PC-9 (cell line): ENCODE measurements at regions of chr6 and their contacts with region 1.

Region 1: GRCh38 chr6:112253841-112254816 is at the start of gene LAMA4:
- DNase-seq: peak; percentile 68 to 81
- H3K4me3 ChIP-seq: peak within 1 kb of the TSS; percentile 70
- H3K27ac ChIP-seq: peak within 1 kb of the TSS; percentile 93
- H3K4me1 ChIP-seq: peaks cover 42% of the 10 kb centered on the region
- H3K27me3 ChIP-seq: no peaks in the 10 kb centered on the region
- CTCF ChIP-seq: peak; percentile 48; the same call in 1 of the 2 replicates
- total RNA-seq, gene LAMA4: 58.3 and 91.0 TPM in 2 replicates

Region 2: DNA sequence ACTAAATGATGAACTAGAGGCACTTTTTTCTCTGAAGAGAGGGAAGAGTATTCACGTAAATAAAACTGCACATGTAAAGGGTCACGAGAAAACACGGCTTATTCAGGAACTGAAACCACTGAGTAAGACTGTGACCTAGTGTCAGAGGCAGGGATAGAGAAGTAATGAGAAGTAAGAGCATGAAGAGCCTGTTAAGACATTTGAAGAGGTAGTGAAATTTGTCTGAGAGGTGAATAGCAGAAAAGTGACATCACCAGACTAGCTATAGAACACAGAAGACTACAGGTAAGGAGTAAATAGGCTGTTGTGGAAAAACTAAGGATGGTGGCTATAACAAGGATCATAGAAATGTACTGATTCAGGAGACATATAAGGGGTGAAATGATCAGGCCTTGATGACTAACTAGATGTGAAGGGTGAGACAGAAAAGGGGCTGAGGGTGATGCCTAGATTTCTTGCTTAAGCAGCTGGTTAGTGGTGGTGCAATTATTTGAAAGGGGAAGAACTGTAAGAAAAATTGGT is 847.9 kb before region 1 on chr6:
- CTCF ChIA-PET with region 1: no interaction called
- POLR2A ChIA-PET with region 1: no interaction called
- intact Hi-C with region 1: no loop called
- DNase-seq: no peak
- H3K4me3 ChIP-seq: no peak overlapping the region
- H3K27ac ChIP-seq: no peak overlapping the region
- H3K4me1 ChIP-seq: no peaks in the 10 kb centered on the region
- H3K27me3 ChIP-seq: no peaks in the 10 kb centered on the region
- CTCF ChIP-seq: no peak

Region 3: DNA sequence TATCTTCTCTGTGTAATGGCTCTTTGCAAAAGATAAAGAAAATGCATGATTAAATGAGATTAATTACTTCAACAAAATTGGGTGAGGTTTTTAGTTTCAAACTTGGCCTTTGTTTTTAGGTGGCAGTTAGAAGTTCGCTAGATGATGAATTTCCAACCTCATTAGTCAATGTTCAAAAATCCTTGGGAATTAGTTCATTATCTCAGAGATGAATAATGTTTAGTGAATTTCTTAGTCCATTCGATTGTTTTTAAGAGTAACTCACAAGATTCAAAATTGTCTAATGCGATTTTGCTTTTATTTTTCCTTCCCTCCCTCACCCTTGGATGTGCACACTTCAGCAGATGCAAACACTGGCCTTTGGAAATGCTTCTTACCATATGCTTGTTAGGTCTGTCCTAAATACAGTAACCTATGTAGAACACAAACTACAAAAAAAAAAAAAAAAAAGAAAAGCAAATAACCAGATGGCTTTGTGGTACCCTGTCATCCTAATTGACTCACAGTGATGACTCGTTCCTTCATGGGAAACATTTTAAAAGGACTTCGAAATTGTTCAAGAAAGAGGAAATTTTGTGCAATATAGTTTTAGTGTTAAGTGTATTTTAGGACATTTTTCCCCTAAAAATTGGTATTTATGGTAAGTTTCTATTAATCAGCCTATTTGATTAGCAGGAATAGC is 100.1 kb before region 1 on chr6:
- CTCF ChIA-PET with region 1: no interaction called
- POLR2A ChIA-PET with region 1: no interaction called
- intact Hi-C with region 1: no loop called
- DNase-seq: peak in 1 of 2 experiments; percentile 77
- H3K4me3 ChIP-seq: no peak overlapping the region
- H3K27ac ChIP-seq: peak overlapping the region; percentile 70
- H3K4me1 ChIP-seq: peaks cover 11% of the 10 kb centered on the region
- H3K27me3 ChIP-seq: no peaks in the 10 kb centered on the region
- CTCF ChIP-seq: no peak

Region 4: GRCh38 chr6:112180095-112180820 is 73.9 kb before region 1 on chr6:
- CTCF ChIA-PET with region 1: interaction called, 3 read pairs
- POLR2A ChIA-PET with region 1: no interaction called
- intact Hi-C with region 1: loop called (anchors 2 kb)
- DNase-seq: peak; percentile 26 to 79
- H3K4me3 ChIP-seq: no peak overlapping the region
- H3K27ac ChIP-seq: peak overlapping the region; percentile 26
- H3K4me1 ChIP-seq: peaks cover 14% of the 10 kb centered on the region
- H3K27me3 ChIP-seq: no peaks in the 10 kb centered on the region
- CTCF ChIP-seq: peak; percentile 99

Region 5: GRCh38 chr6:112216699-112217551 is 37.2 kb before region 1 on chr6:
- CTCF ChIA-PET with region 1: no interaction called
- POLR2A ChIA-PET with region 1: interaction called, 5 read pairs
- intact Hi-C with region 1: loop called (anchors 2 kb)
- DNase-seq: peak; percentile 52 to 96
- H3K4me3 ChIP-seq: peak overlapping the region; percentile 1
- H3K27ac ChIP-seq: peak overlapping the region; percentile 79
- H3K4me1 ChIP-seq: peaks cover 69% of the 10 kb centered on the region
- H3K27me3 ChIP-seq: no peaks in the 10 kb centered on the region
- CTCF ChIP-seq: no peak

Region 6: DNA sequence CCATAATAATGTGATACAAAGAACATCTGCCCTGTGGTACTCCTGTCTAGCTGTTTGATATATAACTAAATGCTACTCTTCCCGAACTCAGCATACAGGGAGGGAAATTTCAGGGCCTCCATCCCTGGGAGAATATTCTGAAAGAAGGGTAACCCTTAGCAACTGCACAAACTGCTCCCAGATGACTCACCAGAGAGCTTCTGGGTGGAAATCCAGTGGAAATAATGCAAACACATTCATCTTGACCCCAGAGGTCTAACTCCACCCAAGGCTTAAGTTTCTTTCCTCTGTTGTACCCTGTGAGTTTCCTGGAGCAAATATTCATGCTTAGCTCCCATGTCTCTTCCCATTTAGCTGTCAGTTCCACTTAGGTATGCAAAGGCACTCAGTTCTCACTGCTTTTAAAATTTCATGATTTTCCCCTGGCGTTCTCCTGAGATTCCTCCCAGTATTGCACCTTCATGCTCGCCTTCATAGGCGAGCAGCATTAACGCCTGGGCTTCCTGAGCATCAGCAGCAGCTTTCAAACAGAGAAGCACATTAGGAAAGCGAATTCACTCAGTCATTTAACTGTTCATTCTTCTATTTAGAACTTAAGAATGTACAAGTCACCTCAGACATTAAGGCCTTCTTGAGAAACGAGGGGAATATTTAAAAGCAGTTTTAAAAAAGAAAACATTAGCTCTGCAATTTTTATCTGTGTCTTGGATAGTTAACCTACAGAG is 44.1 kb after region 1 on chr6:
- CTCF ChIA-PET with region 1: no interaction called
- POLR2A ChIA-PET with region 1: interaction called, 51 read pairs
- intact Hi-C with region 1: loop called (anchors 1 kb)
- DNase-seq: peak; percentile 48 to 98
- H3K4me3 ChIP-seq: peak overlapping the region; percentile 58
- H3K27ac ChIP-seq: peak overlapping the region; percentile 99
- H3K4me1 ChIP-seq: peaks cover 68% of the 10 kb centered on the region
- H3K27me3 ChIP-seq: no peaks in the 10 kb centered on the region
- CTCF ChIP-seq: peak; percentile 49

Region 7: DNA sequence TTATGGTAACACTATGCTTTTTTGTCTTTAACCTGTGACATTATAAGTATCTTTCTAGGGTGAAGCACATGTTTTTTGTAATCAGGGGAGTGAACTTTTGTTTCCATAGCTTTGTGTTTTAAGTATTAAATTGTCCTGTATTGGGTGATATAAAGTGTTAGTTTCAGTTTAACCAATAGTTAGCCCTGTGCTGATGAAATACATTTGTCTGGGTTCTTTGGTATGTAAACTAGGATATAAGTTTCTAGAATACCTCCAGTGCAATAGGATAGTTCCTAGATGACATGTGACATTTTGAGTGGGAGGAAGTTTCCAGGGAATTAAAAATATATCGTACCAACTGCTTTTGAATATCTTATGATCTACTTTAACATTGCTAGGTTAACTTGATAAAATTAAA is 992.1 kb after region 1 on chr6:
- CTCF ChIA-PET with region 1: no interaction called
- POLR2A ChIA-PET with region 1: interaction called, 10 read pairs
- intact Hi-C with region 1: no loop called
- DNase-seq: no peak
- H3K4me3 ChIP-seq: no peak overlapping the region
- H3K27ac ChIP-seq: no peak overlapping the region
- H3K4me1 ChIP-seq: no peaks in the 10 kb centered on the region
- H3K27me3 ChIP-seq: no peaks in the 10 kb centered on the region
- CTCF ChIP-seq: no peak